ENCODE measurements at regions of chr4 and their contacts with region 1.

Region 1: GRCh38 chr4:26410385-26411293 is 79.6 kb downstream of the CCKAR start:
- DNase-seq: peak; percentile 64
- H3K4me3 ChIP-seq: no peak overlapping the region
- H3K27ac ChIP-seq: no peak overlapping the region
- H3K4me1 ChIP-seq: peaks cover 10% of the 10 kb centered on the region
- H3K27me3 ChIP-seq: no peaks in the 10 kb centered on the region

Region 2: DNA sequence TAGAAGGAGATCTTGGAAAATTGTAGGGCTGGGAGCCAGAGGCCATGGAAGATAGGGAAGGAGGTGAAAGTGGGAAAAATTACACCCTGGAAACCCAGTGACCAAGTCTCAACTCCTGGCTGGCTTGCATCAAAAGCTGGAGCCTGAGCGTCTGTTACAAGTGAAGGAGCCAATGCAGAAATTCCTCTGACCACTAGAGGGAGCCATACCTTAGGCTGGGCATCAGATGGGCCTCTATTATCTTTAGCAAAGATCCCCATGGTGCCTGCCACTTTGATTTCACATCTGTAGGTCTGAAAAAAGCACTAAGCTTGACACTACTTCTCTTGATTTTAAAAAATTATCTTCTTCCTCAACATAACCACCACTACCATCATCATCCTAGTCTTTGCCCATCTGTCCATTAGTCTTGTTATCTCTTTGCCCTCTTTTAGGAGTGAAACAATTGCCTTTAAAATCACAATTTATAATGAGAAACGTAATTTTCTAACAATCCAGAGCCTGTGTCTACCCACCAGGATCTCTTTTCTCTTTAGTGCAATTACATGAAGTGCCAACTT is 970.6 kb before region 1 on chr4:
- in situ Hi-C with region 1: loop called (anchors 25 kb)
- DNase-seq: peak; percentile 71
- H3K4me3 ChIP-seq: no peak overlapping the region
- H3K27ac ChIP-seq: no peak overlapping the region
- H3K4me1 ChIP-seq: no peaks in the 10 kb centered on the region
- H3K27me3 ChIP-seq: no peaks in the 10 kb centered on the region

Region 3: DNA sequence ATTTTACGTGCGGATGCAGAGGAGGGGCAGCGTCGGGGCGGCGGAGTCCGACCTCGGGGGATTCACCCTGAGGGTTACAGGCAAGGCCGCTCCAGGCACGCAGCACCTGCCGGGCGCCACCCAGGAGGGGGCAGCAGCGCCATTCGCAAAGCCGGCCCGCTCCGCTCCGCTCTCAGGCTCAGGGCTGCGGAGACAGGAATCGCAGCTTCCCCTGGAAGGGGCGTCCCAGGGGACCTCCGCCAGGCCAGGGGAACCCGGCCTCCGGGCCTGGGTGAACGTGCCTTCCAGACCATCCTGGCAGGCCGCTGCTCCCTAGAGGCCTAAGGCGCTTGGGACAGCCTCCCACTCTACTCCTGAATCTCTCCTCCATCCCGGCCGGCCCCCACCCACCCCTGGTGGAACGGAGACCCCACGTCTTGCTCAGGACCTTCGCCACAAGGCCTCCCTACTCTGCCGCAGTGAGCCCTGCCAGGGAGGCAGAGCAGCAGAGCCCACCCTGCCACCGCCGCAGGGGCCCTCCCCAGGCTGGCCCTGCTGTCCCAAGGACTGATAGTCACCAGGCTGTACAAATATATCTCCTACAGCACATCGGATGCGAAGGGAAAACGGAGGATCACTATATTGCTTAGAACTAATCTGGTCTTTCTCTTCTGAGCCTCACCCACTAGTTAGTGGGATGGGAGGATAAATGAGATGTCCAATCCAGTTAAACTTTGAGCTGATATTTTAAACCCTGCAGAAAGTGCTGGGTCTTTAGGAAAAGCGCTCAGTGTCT is 381.7 kb before region 1 on chr4:
- in situ Hi-C with region 1: loop called (anchors 25 kb)
- DNase-seq: peak; percentile 82
- H3K4me3 ChIP-seq: no peak overlapping the region
- H3K27ac ChIP-seq: no peak overlapping the region
- H3K4me1 ChIP-seq: peaks cover 28% of the 10 kb centered on the region
- H3K27me3 ChIP-seq: no peaks in the 10 kb centered on the region

Region 4: GRCh38 chr4:26081795-26082498 is 328.7 kb before region 1 on chr4:
- in situ Hi-C with region 1: loop called (anchors 10 kb)
- DNase-seq: peak; percentile 48
- H3K4me3 ChIP-seq: no peak overlapping the region
- H3K27ac ChIP-seq: no peak overlapping the region
- H3K4me1 ChIP-seq: no peaks in the 10 kb centered on the region
- H3K27me3 ChIP-seq: peaks cover 75% of the 10 kb centered on the region

Measured in GM23248 (cell line).